Activated naive CD4-positive, alpha-beta T cell treated with anti-CD3 and anti-CD28 coated beads, Interleukin-2, amount 10 ng/mL, durations not matched to agents 7 days and 5 days (primary cell): ENCODE measurements at regions of chr6 and their contacts with region 1.

Region 1: DNA sequence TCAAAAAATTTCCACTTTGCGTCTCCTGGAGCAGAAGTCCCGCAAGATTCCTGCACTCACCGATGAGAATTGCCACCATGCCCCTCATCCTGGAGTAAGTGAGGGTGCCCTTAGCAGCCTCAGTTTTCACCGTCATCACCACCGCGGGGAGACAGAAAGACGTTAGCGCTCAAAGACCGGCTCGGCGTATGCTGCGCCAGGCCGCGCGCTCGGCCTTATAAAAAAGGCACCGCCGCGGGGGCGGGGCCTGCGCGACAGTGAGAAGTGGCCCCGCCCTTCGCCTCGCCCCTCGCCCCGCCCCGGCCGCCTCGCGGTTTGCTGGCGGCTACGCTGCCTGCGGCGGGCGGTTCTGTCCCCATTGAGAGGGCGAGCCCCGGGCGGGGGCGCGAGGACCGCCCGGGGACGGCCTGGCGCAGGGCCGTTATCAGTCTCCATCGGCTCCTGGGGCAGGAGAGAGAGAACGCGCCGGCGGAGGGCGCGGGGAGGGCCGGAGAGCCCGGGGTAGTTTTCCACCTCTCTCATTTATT is 122.3 kb upstream of the SLC2A12 start:
- DNase-seq: peak; percentile 93
- H3K4me3 Mint-ChIP-seq: peak overlapping the region; percentile 99
- H3K27ac Mint-ChIP-seq: peak overlapping the region; percentile 98
- H3K4me1 Mint-ChIP-seq: peaks cover 79% of the 10 kb centered on the region
- H3K27me3 Mint-ChIP-seq: peaks cover 3% of the 10 kb centered on the region

Region 2: DNA sequence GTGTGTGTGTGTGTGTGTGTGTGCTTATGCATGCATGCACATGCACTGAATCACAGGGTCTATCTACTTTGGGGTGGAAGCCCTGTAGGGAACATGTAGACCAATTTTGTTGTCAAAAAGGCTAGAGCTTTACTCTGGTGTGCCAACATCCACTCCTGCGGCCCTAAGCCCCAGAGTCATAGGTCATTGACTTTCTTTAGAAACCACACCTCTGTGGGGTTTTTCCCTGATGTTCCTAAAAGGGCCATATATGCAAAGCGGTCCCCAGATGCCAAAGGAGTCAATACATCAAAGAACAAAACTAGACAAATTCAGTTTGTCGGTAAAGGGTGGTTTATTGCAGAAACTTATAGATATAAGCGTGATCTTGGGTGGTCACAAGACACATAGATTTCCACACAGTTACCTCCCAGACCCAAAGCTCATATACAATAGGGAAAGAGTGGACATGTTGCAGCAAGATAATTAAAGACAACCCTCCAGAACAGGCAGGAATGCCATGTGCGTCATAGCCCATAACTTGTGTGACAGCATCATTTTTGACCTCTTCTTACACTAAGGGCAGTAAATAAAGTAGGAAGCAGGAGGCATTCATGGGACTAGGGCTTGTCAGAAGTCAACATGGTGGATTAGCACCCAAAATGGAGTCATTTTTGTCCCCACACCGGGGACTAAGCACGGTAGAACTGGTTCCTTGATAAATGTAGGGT is 92.4 kb before region 1 on chr6:
- CTCF ChIA-PET with region 1: no interaction called
- DNase-seq: no peak
- H3K4me3 Mint-ChIP-seq: no peak overlapping the region
- H3K27ac Mint-ChIP-seq: no peak overlapping the region
- H3K4me1 Mint-ChIP-seq: peaks cover 21% of the 10 kb centered on the region
- H3K27me3 Mint-ChIP-seq: peaks cover 15% of the 10 kb centered on the region

Region 3: DNA sequence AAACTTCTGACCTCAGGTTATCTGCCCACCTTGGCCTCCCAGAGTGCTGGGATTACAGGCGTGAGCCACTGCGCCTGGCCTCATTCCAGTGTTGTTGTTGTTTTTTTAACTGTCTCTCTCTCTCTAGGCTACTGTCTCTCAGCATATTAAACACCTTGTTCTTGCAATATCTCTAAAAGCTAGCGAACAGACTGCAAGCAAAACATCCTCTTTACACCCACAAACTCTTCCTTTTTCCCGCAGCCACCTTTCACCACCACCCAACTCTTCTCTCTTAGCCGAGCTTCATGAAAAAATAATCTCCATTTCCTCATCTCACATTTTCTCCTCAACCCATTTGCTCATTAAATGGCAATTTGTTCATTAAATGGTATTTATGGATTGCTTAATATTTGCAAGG is 97.6 kb after region 1 on chr6:
- CTCF ChIA-PET with region 1: no interaction called
- DNase-seq: peak; percentile 32
- H3K4me3 Mint-ChIP-seq: peak overlapping the region; percentile 5
- H3K27ac Mint-ChIP-seq: peak overlapping the region; percentile 85
- H3K4me1 Mint-ChIP-seq: peaks cover 41% of the 10 kb centered on the region
- H3K27me3 Mint-ChIP-seq: no peaks in the 10 kb centered on the region

Region 4: GRCh38 chr6:134352786-134353480 is 178.2 kb after region 1 on chr6:
- CTCF ChIA-PET with region 1: interaction called, 16 read pairs
- DNase-seq: no peak
- H3K4me3 Mint-ChIP-seq: no peak overlapping the region
- H3K27ac Mint-ChIP-seq: peak overlapping the region; percentile 94
- H3K4me1 Mint-ChIP-seq: peaks cover 29% of the 10 kb centered on the region
- H3K27me3 Mint-ChIP-seq: no peaks in the 10 kb centered on the region